Activated naive CD4-positive, alpha-beta T cell treated with anti-CD3 and anti-CD28 coated beads for 36 hours (primary cell): ENCODE measurements at regions of chr19 and their contacts with region 1.

Region 1: GRCh38 chr19:54325194-54325621 is 12.2 kb upstream of the LILRA5 start:
- DNase-seq: peak; percentile 71
- H3K4me3 Mint-ChIP-seq: no peak overlapping the region
- H3K27ac Mint-ChIP-seq: no peak overlapping the region
- H3K4me1 Mint-ChIP-seq: peaks cover 29% of the 10 kb centered on the region
- H3K27me3 Mint-ChIP-seq: peaks cover 4% of the 10 kb centered on the region

Region 2: GRCh38 chr19:54218960-54219661 is 106.1 kb before region 1 on chr19:
- CTCF ChIA-PET with region 1: no interaction called
- intact Hi-C with region 1: no loop called
- DNase-seq: no peak
- H3K4me3 Mint-ChIP-seq: no peak overlapping the region
- H3K27ac Mint-ChIP-seq: no peak overlapping the region
- H3K4me1 Mint-ChIP-seq: peaks cover 8% of the 10 kb centered on the region
- H3K27me3 Mint-ChIP-seq: peaks cover 5% of the 10 kb centered on the region

Region 3: GRCh38 chr19:54352546-54352945 is 27.3 kb after region 1 on chr19:
- CTCF ChIA-PET with region 1: interaction called, 27 read pairs
- intact Hi-C with region 1: loop called (anchors 1 kb)
- DNase-seq: no peak
- H3K4me3 Mint-ChIP-seq: no peak overlapping the region
- H3K27ac Mint-ChIP-seq: no peak overlapping the region
- H3K4me1 Mint-ChIP-seq: peaks cover 3% of the 10 kb centered on the region
- H3K27me3 Mint-ChIP-seq: no peaks in the 10 kb centered on the region